ENCODE measurements at regions of chr12 and their contacts with region 1.

Region 1: DNA sequence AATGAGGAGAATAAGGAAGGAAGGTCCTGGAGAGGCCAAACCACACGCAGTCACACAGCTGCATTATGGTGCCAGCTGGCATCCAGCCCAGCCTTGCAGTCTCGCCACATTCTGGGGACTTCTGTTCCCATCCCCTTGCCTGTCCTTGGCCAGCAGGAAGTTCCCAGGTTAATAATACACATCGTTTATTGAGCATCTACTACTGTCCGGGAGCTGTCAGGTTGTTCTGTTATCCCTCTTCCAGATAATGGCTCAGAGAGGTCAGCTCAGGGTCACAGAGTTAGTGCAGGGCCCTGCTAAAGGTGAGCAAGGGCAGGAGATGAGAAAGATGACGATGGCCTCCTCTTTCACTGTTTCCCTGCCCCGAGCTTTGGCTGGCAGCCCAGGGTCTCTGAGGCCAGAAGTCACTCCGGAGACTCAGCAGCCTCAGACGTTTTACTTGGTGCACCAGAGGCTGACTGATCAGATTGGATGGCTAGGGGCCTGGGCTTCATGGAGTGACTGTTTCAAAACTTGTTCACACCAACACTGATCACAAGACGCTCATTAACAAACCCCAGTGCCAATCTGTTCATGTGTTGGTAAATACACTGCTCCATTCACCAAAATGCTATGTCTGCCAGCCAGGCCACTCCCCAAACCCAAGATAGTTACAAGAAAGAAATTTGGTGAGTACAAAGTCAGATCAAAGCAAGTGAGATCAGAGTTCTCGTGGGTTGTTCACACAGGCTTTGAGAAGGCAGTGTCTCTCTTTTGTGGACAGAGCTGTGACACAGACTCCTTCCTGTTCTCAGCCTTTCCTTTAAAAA is 79.2 kb downstream of the B4GALNT3 start:
- DNase-seq: peak; percentile 69
- ATAC-seq: no peak; the same call in 1 of the 2 replicates
- H3K4me3 ChIP-seq: no peak overlapping the region
- H3K27ac ChIP-seq: peak overlapping the region; percentile 70
- H3K4me1 ChIP-seq: peaks cover 28% of the 10 kb centered on the region
- H3K27me3 ChIP-seq: no peaks in the 10 kb centered on the region
- CTCF ChIP-seq: no peak

Region 2: DNA sequence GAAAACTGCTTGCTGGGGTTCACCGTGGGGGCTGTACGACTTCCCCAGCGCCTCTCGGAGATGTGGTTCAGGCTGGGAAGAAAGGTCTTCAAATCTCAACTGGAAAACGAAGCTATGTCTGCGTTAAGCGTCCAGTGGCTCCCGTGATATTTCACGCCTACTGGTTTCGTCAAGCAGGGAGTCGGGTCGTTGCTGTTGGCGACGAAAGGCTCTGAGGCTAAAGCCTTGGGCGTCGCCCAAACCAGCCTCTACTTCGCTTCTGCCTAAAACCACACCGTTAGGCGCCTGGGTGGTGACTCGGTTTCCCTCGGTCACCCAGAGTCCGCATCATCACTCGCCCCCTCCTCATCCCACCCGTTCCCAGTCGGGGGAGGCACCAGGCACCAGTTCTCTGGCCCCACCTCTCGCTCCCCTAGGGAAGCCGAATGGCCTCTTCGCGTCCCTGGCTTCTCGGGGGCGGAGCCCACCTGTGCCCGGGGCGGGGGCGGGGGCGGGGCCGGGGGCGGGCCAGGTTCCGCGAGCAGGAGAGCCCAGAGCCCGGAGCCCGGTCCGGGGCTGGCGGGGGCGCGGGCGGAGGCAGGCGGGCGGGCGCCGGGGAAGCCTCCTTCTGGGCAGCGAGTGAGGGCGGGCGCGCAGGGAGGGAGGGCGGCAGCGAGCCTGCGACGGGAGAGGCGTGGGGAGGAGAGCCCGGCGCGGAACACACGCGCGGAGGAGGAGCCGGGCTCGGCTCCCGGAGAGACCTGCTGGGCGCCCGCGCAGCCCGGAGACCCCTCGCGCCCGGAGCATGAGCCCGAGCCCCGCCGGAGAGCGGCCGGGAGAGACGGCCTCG is 79.3 kb before region 1 on chr12 and contains the start of gene B4GALNT3:
- CTCF ChIA-PET with region 1: no interaction called
- POLR2A ChIA-PET with region 1: no interaction called
- intact Hi-C with region 1: loop called (anchors 5 kb)
- DNase-seq: peak; percentile 34
- ATAC-seq: peak; percentile 63
- H3K4me3 ChIP-seq: peak within 1 kb of the TSS; percentile 67
- H3K27ac ChIP-seq: no peak within 1 kb of the TSS
- H3K4me1 ChIP-seq: peaks cover 16% of the 10 kb centered on the region
- H3K27me3 ChIP-seq: no peaks in the 10 kb centered on the region
- CTCF ChIP-seq: no peak
- total RNA-seq, gene B4GALNT3: 3.7 and 5.0 TPM in 2 replicates

Region 3: DNA sequence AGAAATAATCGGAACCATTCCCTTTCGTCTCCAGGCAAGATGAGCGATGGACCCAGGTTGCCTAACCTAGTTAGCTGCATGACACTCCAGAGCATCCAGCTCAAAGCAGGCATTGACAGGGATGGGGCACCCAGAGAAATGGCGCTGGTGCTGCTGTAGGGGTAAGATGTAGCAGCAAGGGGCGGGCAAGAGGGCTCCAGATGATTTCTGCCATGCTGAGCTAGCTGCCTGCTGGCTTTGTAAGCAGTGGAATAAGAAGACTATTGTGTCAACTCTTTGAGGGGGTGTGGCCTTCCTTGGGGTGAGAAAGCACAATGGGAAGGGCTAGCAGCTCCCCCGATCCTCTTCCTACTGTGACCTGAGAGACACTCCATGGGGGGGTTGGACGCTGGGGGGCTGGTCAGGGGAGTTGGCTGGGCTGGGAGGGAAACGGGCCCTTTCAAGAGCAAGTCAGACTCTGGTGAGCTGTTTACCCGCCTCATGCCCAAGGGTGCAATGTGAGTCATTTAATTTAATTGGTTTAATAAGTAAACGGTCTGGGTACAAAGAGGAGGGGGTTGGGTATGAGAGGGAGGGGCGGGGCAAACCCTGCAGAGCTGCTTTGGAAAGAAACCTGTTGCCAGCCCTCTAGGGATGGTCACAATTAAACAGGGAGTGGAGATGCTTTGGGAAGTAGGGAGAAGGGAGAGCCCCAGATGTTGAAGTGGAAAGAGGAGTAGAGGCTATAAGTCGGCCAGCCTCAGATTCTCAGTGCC is 28.7 kb before region 1 on chr12:
- CTCF ChIA-PET with region 1: interaction called, 8 read pairs
- POLR2A ChIA-PET with region 1: no interaction called
- intact Hi-C with region 1: loop called (anchors 5 kb)
- DNase-seq: peak; percentile 73
- ATAC-seq: peak; percentile 67
- H3K4me3 ChIP-seq: peak overlapping the region; percentile 19; the same call in 1 of the 2 replicates
- H3K27ac ChIP-seq: peak overlapping the region; percentile 92
- H3K4me1 ChIP-seq: peaks cover 29% of the 10 kb centered on the region
- H3K27me3 ChIP-seq: no peaks in the 10 kb centered on the region
- CTCF ChIP-seq: no peak